Endothelial cell of umbilical vein (primary cell): ENCODE measurements at regions of chr10 and their contacts with region 1.

Region 1: GRCh38 chr10:48656241-48656913 is 28.3 kb upstream of the WDFY4 start:
- DNase-seq: peak; percentile 90
- H3K4me3 ChIP-seq: peak overlapping the region in 2 of 3 experiments; percentile 42 to 60
- H3K27ac ChIP-seq: peak overlapping the region; percentile 78
- H3K4me1 ChIP-seq: peaks cover 20% of the 10 kb centered on the region
- H3K27me3 ChIP-seq: peaks cover 0 to 4% of the 10 kb centered on the region in 2 experiments
- CTCF ChIP-seq: peak; percentile 94 to 99
- POLR2A ChIP-seq: no peak

Region 2: GRCh38 chr10:48231699-48232315 is 424.6 kb before region 1 on chr10:
- CTCF ChIA-PET with region 1: no interaction called
- POLR2A ChIA-PET with region 1: no interaction called
- dilution Hi-C with region 1: no loop called
- intact Hi-C with region 1: no loop called
- DNase-seq: no peak
- H3K4me3 ChIP-seq: no peak overlapping the region
- H3K27ac ChIP-seq: no peak overlapping the region
- H3K4me1 ChIP-seq: no peaks in the 10 kb centered on the region
- H3K27me3 ChIP-seq: peaks cover 6 to 20% of the 10 kb centered on the region in 2 experiments
- CTCF ChIP-seq: no peak
- POLR2A ChIP-seq: no peak

Region 3: DNA sequence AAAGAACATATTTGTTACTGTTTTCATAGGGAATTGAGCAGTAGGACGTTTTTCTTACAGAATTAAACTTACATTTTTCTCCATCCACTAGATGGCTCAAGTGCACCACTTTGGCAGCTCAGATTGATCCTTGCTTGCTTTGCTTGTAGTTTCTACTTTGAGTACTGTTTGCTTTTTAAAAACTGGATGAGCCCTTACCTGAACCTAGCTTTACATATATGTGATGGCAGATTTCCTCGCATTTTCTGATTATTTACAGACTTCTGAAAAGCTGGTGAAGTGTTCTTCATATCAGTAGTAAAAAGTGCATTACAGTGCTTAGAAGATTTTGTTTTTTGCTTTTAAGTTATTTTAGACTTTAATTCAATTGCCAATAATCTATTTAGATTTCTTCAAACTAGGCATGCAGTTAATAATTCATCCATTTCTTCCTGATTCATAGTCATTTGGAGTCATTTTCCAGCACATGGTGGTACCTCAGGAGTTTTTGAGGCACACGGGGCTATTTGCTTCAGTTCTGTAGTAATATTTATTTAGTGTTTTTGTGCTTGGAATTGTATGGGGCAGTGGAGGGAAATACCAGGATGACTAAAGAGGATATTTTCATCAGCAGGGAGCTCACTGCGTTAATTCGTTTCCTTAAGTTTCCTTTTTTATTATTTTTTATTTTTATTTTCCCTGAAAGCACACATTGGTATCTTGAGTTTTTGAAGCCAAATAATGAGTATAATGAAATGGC is 292.6 kb before region 1 on chr10:
- CTCF ChIA-PET with region 1: interaction called, 327 read pairs
- POLR2A ChIA-PET with region 1: interaction called, 4 read pairs
- dilution Hi-C with region 1: no loop called
- intact Hi-C with region 1: loop called (anchors 1 kb)
- DNase-seq: peak; percentile 90
- H3K4me3 ChIP-seq: peak overlapping the region in 1 of 3 experiments; percentile 46
- H3K27ac ChIP-seq: peak overlapping the region; percentile 77
- H3K4me1 ChIP-seq: peaks cover 41% of the 10 kb centered on the region
- H3K27me3 ChIP-seq: no peaks in the 10 kb centered on the region
- CTCF ChIP-seq: peak; percentile 45 to 47
- POLR2A ChIP-seq: no peak

Region 4: DNA sequence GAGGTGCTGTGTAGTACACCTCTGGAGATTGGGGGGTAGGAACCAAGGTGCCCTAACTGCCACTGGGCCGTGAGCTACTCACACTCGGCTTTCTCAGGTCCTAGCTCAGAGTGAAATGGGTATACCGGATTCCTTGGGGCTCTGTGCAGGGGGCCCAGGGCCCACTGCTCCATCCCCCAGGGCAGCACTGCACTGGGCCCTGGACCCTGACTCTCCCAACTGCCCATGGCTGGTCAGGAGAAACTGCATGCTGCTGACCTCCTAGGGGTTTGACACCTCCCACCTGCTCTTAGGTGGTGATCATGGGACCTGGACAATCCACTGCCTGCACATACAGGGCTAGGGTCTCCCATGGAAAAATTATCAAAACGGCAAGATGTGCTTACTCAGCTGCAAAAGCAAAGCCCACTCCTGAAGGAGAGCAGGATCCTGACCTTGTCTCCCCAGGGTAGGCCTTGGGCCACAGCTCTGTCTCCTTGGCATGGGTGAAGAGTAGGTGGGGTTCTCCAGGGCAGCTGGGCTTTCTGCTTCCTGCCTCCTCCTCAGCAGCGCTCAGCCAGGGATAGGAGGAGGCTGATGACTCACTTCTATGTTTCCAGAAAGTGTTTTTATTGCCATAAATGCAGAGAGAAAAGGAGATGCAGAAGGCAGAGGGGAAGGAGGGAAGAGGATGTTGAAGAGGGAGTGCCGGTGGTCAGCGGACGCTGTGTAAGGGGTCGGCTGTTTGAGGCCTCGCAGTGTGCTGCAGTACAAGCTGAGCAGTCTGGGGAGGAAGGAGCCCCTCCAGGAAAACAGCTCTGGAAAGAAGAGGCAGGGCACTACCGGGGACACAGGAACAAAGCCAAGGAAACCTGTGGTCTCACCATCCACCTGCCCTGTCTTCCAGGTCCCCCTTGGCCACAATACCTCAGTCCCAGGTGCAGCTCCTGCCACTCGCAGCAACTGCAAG is 159.3 kb before region 1 on chr10:
- CTCF ChIA-PET with region 1: interaction called, 10 read pairs
- POLR2A ChIA-PET with region 1: no interaction called
- dilution Hi-C with region 1: no loop called
- intact Hi-C with region 1: no loop called
- DNase-seq: peak; percentile 81
- H3K4me3 ChIP-seq: no peak overlapping the region
- H3K27ac ChIP-seq: peak overlapping the region; percentile 5
- H3K4me1 ChIP-seq: peaks cover 11% of the 10 kb centered on the region
- H3K27me3 ChIP-seq: no peaks in the 10 kb centered on the region
- CTCF ChIP-seq: no peak
- POLR2A ChIP-seq: no peak

Region 5: DNA sequence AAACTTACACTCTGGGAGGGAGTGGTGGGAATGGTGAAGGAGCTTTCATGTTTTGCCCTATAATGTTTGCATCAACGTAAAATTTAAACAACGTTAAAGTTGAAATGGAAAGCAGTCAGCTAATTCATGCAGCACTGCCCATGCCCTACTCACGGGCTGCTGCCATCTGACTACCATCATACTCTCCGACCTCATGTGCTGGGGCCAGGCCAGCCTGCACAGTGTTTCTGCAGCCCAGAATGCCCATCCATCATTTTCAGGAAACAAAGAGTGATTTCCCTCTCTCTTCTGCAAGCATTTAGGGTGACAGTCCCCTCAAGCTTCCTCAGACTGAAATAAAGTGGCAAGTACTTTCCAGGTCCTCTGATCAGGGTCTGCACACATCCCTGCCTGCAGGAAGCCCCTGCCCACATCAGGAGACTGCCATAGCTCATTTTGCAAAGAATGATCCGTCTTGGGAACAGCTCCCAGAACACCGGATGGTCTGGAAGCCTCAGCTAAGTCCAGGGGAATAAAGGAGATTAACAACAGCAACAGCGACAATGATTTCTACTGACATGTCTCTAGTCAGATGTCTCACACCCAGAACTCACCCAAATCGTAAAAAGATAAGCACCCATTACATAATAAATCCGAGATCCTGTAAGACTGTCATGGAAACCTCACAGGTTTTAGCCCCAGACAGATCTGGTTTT is 91.8 kb before region 1 on chr10:
- CTCF ChIA-PET with region 1: interaction called, 445 read pairs
- POLR2A ChIA-PET with region 1: no interaction called
- dilution Hi-C with region 1: no loop called
- intact Hi-C with region 1: no loop called
- DNase-seq: no peak
- H3K4me3 ChIP-seq: no peak overlapping the region
- H3K27ac ChIP-seq: no peak overlapping the region
- H3K4me1 ChIP-seq: no peaks in the 10 kb centered on the region
- H3K27me3 ChIP-seq: no peaks in the 10 kb centered on the region
- CTCF ChIP-seq: no peak
- POLR2A ChIP-seq: no peak

Region 6: GRCh38 chr10:48614481-48615390 is 41.6 kb before region 1 on chr10:
- CTCF ChIA-PET with region 1: interaction called, 37 read pairs
- POLR2A ChIA-PET with region 1: no interaction called
- dilution Hi-C with region 1: no loop called
- intact Hi-C with region 1: loop called (anchors 2 kb)
- DNase-seq: peak; percentile 18
- H3K4me3 ChIP-seq: no peak overlapping the region
- H3K27ac ChIP-seq: no peak overlapping the region
- H3K4me1 ChIP-seq: peaks cover 9% of the 10 kb centered on the region
- H3K27me3 ChIP-seq: no peaks in the 10 kb centered on the region
- CTCF ChIP-seq: peak; percentile 15 to 18
- POLR2A ChIP-seq: no peak

Region 7: GRCh38 chr10:48773580-48773979 is 117.2 kb after region 1 on chr10:
- CTCF ChIA-PET with region 1: no interaction called
- POLR2A ChIA-PET with region 1: no interaction called
- dilution Hi-C with region 1: no loop called
- intact Hi-C with region 1: no loop called
- DNase-seq: no peak
- H3K4me3 ChIP-seq: no peak overlapping the region
- H3K27ac ChIP-seq: no peak overlapping the region
- H3K4me1 ChIP-seq: no peaks in the 10 kb centered on the region
- H3K27me3 ChIP-seq: no peaks in the 10 kb centered on the region
- CTCF ChIP-seq: no peak
- POLR2A ChIP-seq: no peak

Region 8: DNA sequence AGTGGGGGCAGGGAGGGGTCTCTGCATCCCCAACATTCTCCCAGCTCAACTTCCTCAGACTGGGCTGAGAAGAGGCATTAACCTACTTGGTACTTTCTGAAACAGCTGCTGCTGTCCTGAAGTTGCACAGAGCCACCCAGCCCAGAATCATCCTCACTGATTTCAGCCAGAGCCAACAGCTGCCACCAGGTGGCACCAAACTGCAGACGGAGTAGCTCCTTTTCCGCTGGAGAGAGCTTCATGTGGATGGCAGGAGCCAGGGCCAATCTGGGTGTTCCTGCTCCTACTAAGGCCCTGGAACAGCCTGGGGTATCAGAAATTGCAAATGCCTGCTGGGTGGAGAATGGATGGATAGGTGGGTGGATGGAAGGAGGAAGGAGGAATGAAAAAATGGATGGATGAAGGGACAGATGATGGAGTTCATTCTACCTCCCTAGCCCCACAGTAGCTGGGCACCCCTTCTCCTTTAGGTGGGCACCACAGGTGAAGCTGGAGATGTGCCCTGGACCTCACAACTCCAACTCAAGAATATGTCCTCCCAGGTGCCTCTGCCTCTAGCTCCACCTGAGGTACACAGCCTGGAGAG is 751.3 kb after region 1 on chr10:
- CTCF ChIA-PET with region 1: interaction called, 23 read pairs
- POLR2A ChIA-PET with region 1: no interaction called
- dilution Hi-C with region 1: no loop called
- intact Hi-C with region 1: loop called (anchors 1 kb)
- DNase-seq: peak; percentile 62
- H3K4me3 ChIP-seq: no peak overlapping the region
- H3K27ac ChIP-seq: no peak overlapping the region
- H3K4me1 ChIP-seq: no peaks in the 10 kb centered on the region
- H3K27me3 ChIP-seq: peaks cover 2 to 10% of the 10 kb centered on the region in 2 experiments
- CTCF ChIP-seq: peak; percentile 90 to 91
- POLR2A ChIP-seq: no peak